Esophagus muscularis mucosa (tissue), 4 donors: ENCODE measurements at regions of chr10 and their contacts with region 1.

Region 1: DNA sequence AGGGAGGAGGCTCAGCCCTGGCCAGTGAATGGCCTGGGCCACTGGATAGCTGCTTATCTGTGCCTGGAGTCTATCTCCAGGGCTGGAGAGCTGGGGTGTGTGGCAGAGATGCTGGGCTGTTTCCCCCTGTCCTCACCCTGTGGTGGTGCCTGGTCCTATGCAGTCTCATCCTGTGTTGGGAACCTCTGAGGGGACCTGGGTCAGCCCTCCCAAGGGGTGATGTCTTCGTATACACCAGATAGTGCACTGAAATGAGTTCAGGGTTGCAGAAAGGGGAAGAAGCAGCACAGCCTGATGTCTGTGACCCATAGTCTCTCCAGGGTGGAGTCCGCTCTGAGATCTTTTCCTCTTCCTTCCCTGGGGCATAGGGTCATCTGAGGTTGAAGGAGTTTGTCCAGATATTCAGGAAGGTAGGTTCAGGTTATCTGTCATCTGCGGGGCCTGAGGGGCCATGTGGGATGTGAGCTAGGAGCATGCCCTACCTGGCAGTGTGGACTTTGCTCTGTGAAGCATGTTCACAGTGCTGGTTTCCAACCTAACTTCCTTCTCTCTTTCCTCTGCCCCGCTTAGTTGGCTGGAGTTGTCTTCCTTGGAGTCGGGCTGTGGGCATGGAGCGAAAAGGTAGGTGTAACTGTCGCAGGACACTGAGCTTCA is 33.4 kb upstream of the SH2D4B start:
- DNase-seq: no peak
- H3K4me3 ChIP-seq: no peak overlapping the region
- H3K27ac ChIP-seq: peak overlapping the region; percentile 57 to 71 (median 64)
- H3K4me1 ChIP-seq: peaks cover 78 to 91% (median 82%) of the 10 kb centered on the region in 4 donors
- H3K27me3 ChIP-seq: no peaks in the 10 kb centered on the region
- CTCF ChIP-seq: no peak
- EP300 ChIP-seq: no peak
- POLR2A ChIP-seq: no peak

Region 2: GRCh38 chr10:80444646-80445319 is 59.5 kb before region 1 on chr10:
- intact Hi-C with region 1: loop called (anchors 2 kb)
- DNase-seq: no peak
- H3K4me3 ChIP-seq: no peak overlapping the region
- H3K27ac ChIP-seq: peak overlapping the region in 1 of 4 donors; percentile 30
- H3K4me1 ChIP-seq: peaks cover 0 to 17% (median 10%) of the 10 kb centered on the region in 4 donors
- H3K27me3 ChIP-seq: no peaks in the 10 kb centered on the region
- CTCF ChIP-seq: peak; percentile 51 to 90 (median 67)
- EP300 ChIP-seq: no peak
- POLR2A ChIP-seq: no peak

Region 3: DNA sequence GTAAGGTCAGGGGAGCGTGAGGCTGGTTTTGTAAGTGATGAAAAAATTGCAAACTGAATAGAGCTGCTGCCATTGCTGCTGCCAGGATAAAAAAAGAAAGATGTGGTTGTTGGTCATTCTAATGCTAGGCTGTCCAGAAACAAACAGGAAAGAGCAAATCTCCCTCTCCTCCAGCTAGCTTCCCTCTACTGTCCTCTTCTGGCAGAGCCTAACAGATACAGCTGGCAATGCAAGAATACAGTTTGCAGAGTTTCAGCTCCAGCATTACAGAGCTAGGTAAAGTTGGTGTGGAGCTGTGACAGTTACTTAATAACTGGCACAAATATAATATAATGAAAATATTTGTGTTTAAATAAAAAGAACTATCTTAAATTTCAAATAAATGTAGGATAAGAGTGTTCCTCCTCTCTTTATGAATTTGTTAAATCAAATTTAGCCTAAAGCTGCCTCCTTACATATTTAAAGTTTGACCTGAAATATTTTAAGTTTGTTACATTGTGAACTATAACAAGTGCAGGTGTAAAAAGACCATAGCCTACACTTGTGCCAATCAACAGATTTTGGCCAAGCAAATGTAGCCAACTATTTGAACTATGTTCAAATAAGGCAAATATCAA is 441.1 kb after region 1 on chr10:
- intact Hi-C with region 1: no loop called
- DNase-seq: no peak
- H3K4me3 ChIP-seq: no peak overlapping the region
- H3K27ac ChIP-seq: no peak overlapping the region
- H3K4me1 ChIP-seq: peaks cover 0 to 5% (median 0%) of the 10 kb centered on the region in 4 donors
- H3K27me3 ChIP-seq: no peaks in the 10 kb centered on the region
- CTCF ChIP-seq: peak in 2 of 3 experiments; percentile 13 to 42
- EP300 ChIP-seq: no peak
- POLR2A ChIP-seq: no peak